ENCODE measurements at regions of chr12 and their contacts with region 1.

Region 1: DNA sequence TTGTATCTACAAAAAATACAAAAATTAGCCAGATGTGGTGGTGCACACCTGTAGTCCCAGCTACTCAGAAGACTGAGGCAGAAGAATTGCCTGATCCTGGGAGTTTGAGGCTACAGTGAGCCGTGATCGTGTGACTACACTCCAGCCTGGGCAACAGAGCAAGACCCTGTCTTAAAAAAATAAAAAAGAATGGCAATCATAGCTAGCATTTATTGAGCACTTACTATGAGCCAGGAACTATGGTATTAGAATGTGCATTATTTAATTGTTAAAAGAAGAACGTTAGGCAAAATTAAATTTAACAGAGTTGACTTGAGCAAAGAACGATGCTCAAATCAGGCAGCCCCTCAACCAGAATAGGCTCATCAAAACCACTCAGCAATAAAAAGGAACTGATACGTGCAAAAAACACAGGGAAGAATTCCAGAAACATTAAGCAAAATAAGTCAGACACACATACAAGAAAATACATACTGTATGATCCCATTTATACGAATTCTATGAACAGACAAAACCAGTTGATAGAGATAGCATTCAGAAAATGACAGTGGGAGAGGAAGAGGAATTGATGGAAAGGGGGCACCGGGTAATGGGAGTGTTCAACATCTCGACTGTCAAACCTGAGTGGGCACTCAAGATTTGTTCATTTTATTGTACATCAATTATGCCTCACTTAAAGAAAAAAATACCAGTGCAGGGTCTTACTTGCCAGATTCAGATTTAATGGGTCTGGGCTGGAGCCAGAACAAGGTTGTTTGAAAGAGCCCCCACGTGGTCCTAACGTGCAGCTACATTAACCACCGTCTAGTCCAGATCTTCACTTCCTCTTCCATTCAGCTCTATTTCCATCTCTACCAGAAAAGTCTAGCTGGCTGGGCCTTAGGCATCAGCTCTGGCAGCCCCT is 8.0 kb downstream of the SCNN1A start:
- DNase-seq: no peak
- ATAC-seq: peak; percentile 65
- H3K4me3 Mint-ChIP-seq: peak overlapping the region; percentile 25
- H3K27ac Mint-ChIP-seq: peak overlapping the region; percentile 74
- H3K4me1 Mint-ChIP-seq: peaks cover 32% of the 10 kb centered on the region
- H3K27me3 Mint-ChIP-seq: no peaks in the 10 kb centered on the region

Region 2: DNA sequence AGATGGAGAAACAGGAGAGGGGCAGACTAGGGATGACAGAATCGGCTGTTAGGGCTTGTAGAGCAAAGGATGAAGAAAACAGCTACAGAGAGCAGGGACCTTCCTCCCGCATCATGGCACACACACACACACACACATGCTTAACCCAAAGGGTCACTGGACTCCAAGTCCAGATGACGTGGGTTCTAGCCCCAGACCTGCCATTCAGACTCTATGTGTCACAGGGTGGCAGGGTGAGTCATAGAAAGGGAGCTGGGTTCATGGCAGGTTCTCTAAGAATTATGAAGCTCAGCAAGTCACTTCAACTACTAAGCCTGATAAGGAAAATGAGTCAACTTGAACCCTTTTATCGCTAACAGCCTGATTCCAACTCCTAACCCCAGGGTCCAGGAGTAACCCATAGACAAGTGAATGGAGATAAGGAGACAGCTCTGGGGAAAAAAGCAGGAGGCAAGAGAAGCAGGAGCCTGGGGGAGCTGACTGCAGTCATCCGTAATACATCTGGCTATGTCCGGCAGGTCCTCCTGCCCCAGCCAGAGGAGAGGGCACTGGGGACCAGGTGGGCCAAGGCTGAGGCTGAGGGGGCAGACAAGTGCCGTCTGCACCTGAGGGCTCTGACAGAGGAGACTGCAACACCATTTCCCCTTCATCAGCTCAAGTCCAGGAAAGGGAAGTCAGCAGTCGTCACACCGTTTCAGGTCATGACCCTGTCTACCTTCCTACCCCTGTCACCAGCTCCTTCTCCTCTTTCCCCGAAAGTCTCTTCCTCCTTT is 21.8 kb before region 1 on chr12:
- POLR2A ChIA-PET with region 1: interaction called, 122 read pairs
- DNase-seq: no peak
- ATAC-seq: peak; percentile 42
- H3K4me3 Mint-ChIP-seq: peak overlapping the region; percentile 65
- H3K27ac Mint-ChIP-seq: peak overlapping the region; percentile 88
- H3K4me1 Mint-ChIP-seq: peaks cover 44% of the 10 kb centered on the region
- H3K27me3 Mint-ChIP-seq: no peaks in the 10 kb centered on the region

Region 3: DNA sequence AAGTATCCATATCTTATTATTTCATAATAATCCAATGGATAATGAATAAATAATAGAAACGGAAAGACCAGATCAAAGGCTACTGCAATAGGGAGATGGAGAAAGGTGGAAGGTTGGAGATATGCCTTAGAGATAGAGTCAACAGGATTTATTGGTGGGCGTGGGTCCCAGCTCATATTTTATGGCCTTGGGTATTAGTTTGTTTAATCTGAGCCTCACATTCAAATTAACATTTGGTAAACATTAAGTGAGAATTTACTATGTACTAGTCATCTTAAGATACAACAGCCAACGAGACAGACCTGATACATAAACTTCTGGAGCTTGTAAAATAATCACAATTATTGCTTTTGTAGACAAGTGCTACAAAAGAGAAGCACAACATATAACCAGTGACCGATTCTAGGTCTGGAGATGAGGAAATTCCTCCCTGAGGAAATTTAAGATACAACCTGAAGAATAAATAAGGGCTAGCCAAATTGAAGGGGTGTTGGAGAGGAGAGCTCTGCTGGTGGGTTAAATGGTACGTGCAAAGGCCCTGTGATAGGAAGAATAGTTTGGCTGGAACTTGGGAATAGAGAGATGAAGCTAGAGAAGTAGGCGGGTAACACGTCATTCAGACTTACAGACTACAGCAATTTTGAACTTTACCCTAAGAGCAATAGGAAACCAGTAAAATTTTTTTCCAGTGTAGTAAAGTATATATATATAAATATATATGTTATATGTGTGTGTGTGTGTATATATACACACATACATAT is 32.7 kb after region 1 on chr12:
- POLR2A ChIA-PET with region 1: no interaction called
- DNase-seq: no peak
- ATAC-seq: no peak
- H3K4me3 Mint-ChIP-seq: no peak overlapping the region
- H3K27ac Mint-ChIP-seq: no peak overlapping the region
- H3K4me1 Mint-ChIP-seq: peaks cover 3% of the 10 kb centered on the region
- H3K27me3 Mint-ChIP-seq: peaks cover 9% of the 10 kb centered on the region